Activated CD8-positive, alpha-beta memory T cell treated with anti-CD3 and anti-CD28 coated beads, Interleukin-2, amount 10 ng/mL, durations not matched to agents 7 days and 5 days (primary cell): ENCODE measurements at regions of chr1 and their contacts with region 1.

Region 1: DNA sequence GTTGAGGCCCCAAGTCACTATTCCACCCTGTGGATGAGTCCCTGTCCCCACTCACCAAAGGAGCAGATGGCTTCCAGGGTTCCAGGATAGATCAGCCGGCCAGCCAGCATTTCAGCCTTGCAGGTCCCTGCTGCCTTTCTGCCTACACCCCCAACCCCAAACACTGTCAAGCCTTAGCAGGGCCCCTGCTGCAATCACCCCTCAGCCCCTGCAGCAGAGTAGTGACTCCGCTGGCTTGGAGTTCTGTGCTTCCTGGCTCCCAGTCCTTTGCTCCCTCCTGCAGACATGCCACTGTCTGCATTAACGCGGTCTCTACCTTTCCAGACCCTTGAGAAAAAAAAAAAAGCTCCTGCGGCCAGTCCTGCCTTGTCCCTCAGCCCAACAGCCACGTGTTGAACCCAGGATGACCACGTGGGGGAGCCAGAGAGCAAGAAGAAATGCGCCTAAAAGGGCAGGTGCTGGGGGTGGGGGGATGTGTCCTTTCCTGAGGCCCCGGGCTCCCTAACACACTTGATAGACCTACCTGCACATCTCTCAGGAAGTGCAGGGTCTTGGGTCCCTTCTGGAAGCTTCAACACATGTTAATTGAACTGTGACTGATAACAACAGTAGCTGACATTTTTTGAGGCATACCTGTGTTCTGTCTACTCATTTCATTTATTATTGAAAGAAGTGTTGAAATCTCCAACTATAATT is 37.4 kb downstream of the RASSF5 start:
- DNase-seq: peak; percentile 86
- ATAC-seq: peak; percentile 92
- H3K4me3 Mint-ChIP-seq: no peak overlapping the region
- H3K27ac Mint-ChIP-seq: peak overlapping the region; percentile 28
- H3K4me1 Mint-ChIP-seq: peaks cover 13% of the 10 kb centered on the region
- H3K27me3 Mint-ChIP-seq: no peaks in the 10 kb centered on the region

Region 2: DNA sequence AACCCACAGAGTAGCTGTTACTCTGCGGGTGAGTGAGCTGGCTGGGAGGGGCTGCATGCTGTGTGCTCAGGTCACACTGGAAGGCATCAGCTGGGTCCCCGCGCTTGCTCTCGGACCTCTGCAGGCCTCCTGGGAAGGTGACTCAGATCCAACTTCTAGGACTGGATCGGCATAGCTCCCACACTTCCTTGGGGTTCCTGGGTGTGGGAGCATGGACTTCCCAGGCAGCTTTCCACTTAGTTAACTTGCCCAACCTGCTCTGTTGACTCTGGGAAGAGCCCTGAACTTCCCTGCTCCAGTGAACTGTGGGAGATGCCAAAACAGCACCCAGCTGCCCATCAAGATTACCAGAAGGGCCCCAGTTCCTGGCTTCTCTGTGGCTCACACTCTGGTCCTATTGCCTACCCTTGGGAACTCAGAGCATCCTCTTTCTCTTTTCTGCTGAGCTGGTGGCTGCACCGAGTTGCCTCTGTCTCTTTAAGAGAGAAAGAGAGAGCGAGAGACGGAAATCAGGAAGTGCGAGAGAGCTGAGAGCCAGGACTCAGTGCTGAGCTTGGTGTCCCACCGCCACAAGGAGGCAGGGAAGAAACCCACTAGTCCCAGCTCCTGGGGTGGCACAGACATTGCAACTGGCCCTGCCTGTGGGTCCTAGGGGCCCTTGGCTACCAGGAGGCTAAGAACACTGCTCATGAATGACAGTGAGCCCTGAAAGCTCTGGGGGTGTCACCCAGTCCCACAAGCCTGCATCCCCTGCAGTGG is 74.6 kb before region 1 on chr1 and contains the start of gene IKBKE:
- CTCF ChIA-PET with region 1: interaction called, 15 read pairs
- DNase-seq: peak; percentile 84
- ATAC-seq: peak; percentile 72
- H3K4me3 Mint-ChIP-seq: peak within 1 kb of the TSS; percentile 91
- H3K27ac Mint-ChIP-seq: peak within 1 kb of the TSS; percentile 92
- H3K4me1 Mint-ChIP-seq: peaks cover 88% of the 10 kb centered on the region
- H3K27me3 Mint-ChIP-seq: no peaks in the 10 kb centered on the region
- total RNA-seq, gene IKBKE: 64.8 to 72.7 TPM

Region 3: DNA sequence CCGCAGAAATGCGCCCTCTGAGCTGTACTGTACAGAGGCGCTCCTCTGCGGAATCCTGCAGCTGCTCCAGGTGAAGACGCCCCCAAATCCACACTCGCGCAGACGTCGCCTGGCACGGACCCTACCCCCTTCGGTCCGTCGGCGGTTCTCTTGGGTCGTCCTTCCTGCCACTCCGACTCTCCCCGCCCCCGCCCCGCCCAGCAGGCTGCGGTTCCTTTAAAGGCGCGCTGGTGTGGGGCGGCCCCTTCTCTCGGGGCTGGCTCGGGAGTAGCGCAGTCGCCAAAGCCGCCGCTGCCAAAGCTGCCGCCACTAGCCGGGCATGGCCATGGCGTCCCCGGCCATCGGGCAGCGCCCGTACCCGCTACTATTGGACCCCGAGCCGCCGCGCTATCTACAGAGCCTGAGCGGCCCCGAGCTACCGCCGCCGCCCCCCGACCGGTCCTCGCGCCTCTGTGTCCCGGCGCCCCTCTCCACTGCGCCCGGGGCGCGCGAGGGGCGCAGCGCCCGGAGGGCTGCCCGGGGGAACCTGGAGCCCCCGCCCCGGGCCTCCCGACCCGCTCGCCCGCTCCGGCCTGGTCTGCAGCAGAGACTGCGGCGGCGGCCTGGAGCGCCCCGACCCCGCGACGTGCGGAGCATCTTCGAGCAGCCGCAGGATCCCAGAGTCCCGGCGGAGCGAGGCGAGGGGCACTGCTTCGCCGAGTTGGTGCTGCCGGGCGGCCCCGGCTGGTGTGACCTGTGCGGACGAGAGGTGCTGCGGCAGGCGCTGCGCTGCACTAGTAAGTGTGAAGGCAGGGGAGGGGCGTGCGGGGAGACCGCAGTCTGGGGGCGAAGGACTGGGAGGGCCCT is 37.2 kb before region 1 on chr1 and contains the start of gene RASSF5:
- CTCF ChIA-PET with region 1: interaction called, 10 read pairs
- DNase-seq: peak; percentile 90
- ATAC-seq: peak; percentile 87
- H3K4me3 Mint-ChIP-seq: peak within 1 kb of the TSS; percentile 67
- H3K27ac Mint-ChIP-seq: no peak within 1 kb of the TSS
- H3K4me1 Mint-ChIP-seq: peaks cover 48% of the 10 kb centered on the region
- H3K27me3 Mint-ChIP-seq: peaks cover 26% of the 10 kb centered on the region
- total RNA-seq, gene RASSF5: 184 to 216 TPM

Region 4: DNA sequence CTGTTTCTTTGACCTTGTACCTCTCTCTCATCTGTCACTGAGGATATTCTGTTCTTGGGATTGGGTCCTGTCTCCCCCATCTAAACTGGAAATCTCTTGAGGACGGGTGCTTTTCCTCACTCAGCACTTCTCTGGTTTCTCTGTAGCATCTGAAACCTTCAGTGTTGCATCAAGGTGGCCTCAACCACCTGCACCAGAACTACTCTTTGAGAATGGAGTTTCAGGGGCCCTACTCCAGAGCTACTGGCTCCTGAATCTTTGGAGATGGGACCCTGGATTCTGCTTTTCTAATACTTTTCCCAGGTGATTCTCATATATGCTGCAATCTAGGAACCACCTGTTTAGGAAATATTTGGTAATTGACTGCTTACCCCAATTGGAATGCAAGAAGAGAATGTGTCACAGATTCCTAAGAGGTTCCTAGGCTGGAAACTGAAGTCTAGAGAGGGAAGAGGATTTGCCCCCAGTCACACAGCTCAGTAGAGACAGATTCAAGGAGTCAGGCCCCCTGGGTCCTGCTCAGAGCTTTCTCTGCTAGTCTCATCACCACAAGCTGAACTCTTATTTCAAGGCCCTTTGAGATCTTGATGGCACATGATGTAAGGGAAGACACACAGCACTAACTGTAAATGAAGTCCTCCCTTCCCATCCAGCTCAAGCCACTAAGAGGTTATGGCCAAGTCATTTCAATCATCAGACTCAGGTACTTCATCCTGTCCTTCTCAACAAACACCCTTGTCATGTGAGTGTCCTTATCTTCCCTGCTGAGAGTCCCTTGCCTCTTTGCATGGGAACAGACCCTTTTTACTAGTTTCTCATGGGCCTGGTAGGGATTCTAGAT is 18.9 kb after region 1 on chr1:
- CTCF ChIA-PET with region 1: interaction called, 63 read pairs
- DNase-seq: peak; percentile 41
- ATAC-seq: no peak
- H3K4me3 Mint-ChIP-seq: peak overlapping the region; percentile 70
- H3K27ac Mint-ChIP-seq: peak overlapping the region; percentile 84
- H3K4me1 Mint-ChIP-seq: peaks cover 91% of the 10 kb centered on the region
- H3K27me3 Mint-ChIP-seq: no peaks in the 10 kb centered on the region

Region 5: DNA sequence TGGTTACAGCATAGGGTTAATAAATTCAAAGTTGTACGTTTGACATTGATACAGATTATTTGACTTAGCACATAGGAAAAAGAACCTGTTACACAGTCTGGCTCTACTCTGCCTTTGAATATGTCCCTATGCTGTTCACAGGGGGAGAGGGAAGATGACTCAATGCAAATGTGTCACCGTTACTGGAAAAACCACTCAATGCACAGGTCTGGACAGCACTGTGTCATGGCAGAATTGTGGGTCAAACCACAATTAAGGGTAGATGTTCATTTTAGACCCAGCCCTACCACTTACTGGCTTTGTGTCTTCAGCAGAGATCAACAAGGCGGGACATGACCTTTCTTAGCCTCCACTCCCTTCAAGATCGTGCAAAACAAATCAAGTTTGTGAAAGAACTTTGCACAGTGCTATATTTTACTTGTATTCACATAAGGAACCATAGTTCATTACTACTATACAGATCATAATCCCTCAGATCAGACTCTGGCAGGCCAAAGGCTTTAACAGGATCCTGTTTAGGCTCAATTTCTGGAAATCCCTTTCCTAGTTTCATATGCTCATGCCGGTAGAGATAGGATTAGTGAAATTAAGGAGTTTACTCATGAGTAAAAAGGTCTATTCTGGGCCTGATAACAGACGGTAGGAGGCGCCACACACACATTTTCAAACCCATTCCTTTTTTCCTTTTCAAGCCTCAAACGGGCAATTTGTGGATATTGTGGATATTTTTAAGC is 45.5 kb after region 1 on chr1:
- CTCF ChIA-PET with region 1: interaction called, 490 read pairs
- DNase-seq: peak; percentile 91
- ATAC-seq: peak; percentile 96
- H3K4me3 Mint-ChIP-seq: peak overlapping the region; percentile 35
- H3K27ac Mint-ChIP-seq: peak overlapping the region; percentile 91
- H3K4me1 Mint-ChIP-seq: peaks cover 70% of the 10 kb centered on the region
- H3K27me3 Mint-ChIP-seq: no peaks in the 10 kb centered on the region

Region 6: DNA sequence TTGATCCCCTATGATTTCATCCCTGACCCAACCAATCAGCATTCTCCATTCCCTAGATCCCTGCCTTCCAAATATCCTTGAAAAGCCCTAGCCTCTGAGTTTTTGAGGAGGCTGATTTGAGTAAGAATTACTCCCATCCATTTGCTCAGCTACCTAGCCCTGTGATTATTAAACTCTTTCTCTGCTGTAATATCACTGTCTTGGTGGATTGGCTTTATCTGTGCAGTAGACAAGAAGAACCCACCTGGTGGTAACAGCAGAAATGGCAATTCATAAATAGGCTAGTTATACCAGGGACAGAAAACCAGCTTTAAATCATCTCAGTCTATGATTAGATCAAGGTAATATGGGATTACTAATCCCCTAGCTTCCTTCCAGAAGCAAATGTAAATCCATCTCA is 333.7 kb after region 1 on chr1:
- CTCF ChIA-PET with region 1: no interaction called
- DNase-seq: no peak
- ATAC-seq: no peak
- H3K4me3 Mint-ChIP-seq: no peak overlapping the region
- H3K27ac Mint-ChIP-seq: no peak overlapping the region
- H3K4me1 Mint-ChIP-seq: peaks cover 4% of the 10 kb centered on the region
- H3K27me3 Mint-ChIP-seq: peaks cover 7% of the 10 kb centered on the region